ENCODE measurements at regions of chr2 and their contacts with region 1.

Region 1: GRCh38 chr2:54115284-54116137 is at the start of gene ACYP2:
- DNase-seq: peak; percentile 77 to 96 (median 91)
- ATAC-seq: peak; percentile 81
- H3K4me3 ChIP-seq: peak within 1 kb of the TSS; percentile 75 to 93
- H3K4me3 Mint-ChIP-seq: peak within 1 kb of the TSS; percentile 98
- H3K27ac ChIP-seq: peak within 1 kb of the TSS; percentile 94 to 98
- H3K27ac Mint-ChIP-seq: peak within 1 kb of the TSS; percentile 100
- H3K4me1 ChIP-seq: peaks cover 5% of the 10 kb centered on the region
- H3K4me1 Mint-ChIP-seq: peaks cover 22% of the 10 kb centered on the region
- H3K27me3 ChIP-seq: no peaks in the 10 kb centered on the region
- H3K27me3 Mint-ChIP-seq: no peaks in the 10 kb centered on the region
- CTCF ChIP-seq: no peak
- total RNA-seq, gene ACYP2: 10.2 to 10.4 TPM

Region 2: DNA sequence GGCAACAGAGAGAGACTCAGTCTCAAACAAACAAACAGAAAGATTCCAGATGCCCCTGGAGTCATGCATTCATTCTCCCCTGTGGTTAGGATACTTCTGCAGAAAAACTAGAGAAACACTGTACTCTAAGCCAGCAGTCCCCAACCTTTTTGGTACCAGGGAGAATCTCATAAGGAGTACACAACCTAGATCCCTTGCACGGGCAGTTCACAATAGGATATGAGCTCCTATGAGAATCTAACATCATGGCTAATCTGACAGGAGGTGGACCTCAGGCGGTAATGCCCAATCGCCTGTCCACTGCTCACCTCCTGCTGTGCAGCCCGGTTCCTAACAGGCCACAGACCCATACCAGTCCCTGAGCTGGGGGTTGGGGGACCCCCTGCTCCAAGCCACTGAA is 163.0 kb before region 1 on chr2:
- CTCF ChIA-PET with region 1: no interaction called
- POLR2A ChIA-PET with region 1: no interaction called
- intact Hi-C with region 1: no loop called
- DNase-seq: no peak
- ATAC-seq: no peak
- H3K4me3 ChIP-seq: no peak overlapping the region
- H3K4me3 Mint-ChIP-seq: no peak overlapping the region
- H3K27ac ChIP-seq: no peak overlapping the region
- H3K27ac Mint-ChIP-seq: no peak overlapping the region
- H3K4me1 ChIP-seq: peaks cover 11% of the 10 kb centered on the region
- H3K4me1 Mint-ChIP-seq: peaks cover 49% of the 10 kb centered on the region
- H3K27me3 ChIP-seq: no peaks in the 10 kb centered on the region
- H3K27me3 Mint-ChIP-seq: no peaks in the 10 kb centered on the region
- CTCF ChIP-seq: no peak

Region 3: GRCh38 chr2:53970724-53971602 is 144.5 kb before region 1 on chr2 and contains the start of gene PSME4:
- CTCF ChIA-PET with region 1: no interaction called
- POLR2A ChIA-PET with region 1: interaction called, 3 read pairs
- intact Hi-C with region 1: loop called (anchors 1 to 2 kb)
- DNase-seq: peak; percentile 88 to 97 (median 93)
- ATAC-seq: peak; percentile 90
- H3K4me3 ChIP-seq: peak within 1 kb of the TSS; percentile 78 to 99
- H3K4me3 Mint-ChIP-seq: peak within 1 kb of the TSS; percentile 95
- H3K27ac ChIP-seq: peak within 1 kb of the TSS; percentile 83 to 92
- H3K27ac Mint-ChIP-seq: peak within 1 kb of the TSS; percentile 98
- H3K4me1 ChIP-seq: peaks cover 25% of the 10 kb centered on the region
- H3K4me1 Mint-ChIP-seq: peaks cover 56% of the 10 kb centered on the region
- H3K27me3 ChIP-seq: no peaks in the 10 kb centered on the region
- H3K27me3 Mint-ChIP-seq: no peaks in the 10 kb centered on the region
- CTCF ChIP-seq: no peak
- total RNA-seq, gene PSME4: 98.8 to 107 TPM

Region 4: GRCh38 chr2:54097124-54097523 is 18.4 kb before region 1 on chr2:
- CTCF ChIA-PET with region 1: no interaction called
- POLR2A ChIA-PET with region 1: no interaction called
- intact Hi-C with region 1: no loop called
- DNase-seq: no peak
- ATAC-seq: no peak
- H3K4me3 ChIP-seq: no peak overlapping the region
- H3K4me3 Mint-ChIP-seq: no peak overlapping the region
- H3K27ac ChIP-seq: no peak overlapping the region
- H3K27ac Mint-ChIP-seq: no peak overlapping the region
- H3K4me1 ChIP-seq: peaks cover 9% of the 10 kb centered on the region
- H3K4me1 Mint-ChIP-seq: peaks cover 17% of the 10 kb centered on the region
- H3K27me3 ChIP-seq: no peaks in the 10 kb centered on the region
- H3K27me3 Mint-ChIP-seq: no peaks in the 10 kb centered on the region
- CTCF ChIP-seq: no peak

Region 5: DNA sequence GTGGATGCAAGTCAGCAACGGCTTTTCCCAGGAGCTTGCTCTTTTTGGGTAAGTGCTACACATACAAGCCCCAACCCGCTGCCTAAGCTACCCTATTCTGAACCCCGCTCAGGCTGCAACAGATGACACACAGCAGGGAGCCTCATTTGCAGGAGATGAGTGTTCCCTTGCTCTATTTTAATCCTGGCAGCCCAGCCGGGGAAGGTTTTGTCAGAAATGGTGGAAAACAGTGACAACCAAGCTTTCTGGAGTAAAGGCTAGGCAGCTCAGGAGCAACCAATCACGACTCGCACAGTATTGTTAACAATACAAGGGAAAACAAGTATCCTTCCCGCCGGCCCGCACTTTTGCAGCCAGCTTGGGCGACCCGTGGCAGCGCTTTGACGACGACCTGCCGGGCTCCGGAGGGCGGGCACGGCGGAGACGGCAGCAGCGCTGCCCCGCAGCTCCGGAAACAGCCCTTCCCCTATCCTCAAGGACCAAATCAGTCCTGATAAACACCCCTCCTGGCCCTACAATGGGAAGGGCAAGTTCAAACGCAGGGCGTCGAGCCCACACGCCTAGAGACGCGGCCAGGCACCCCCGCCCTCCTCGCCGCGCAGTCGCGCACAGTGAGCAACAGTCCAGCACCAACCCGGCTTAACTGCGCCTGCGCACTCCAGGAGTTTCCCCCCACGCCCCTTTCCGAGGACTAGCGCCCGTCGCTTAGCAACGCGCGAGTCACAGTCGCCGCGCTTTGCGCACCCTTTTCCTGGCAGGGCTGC is 214.8 kb after region 1 on chr2:
- CTCF ChIA-PET with region 1: no interaction called
- POLR2A ChIA-PET with region 1: interaction called, 3 read pairs
- intact Hi-C with region 1: loop called (anchors 1 to 5 kb)
- DNase-seq: peak; percentile 65 to 94 (median 85)
- ATAC-seq: peak; percentile 96
- H3K4me3 ChIP-seq: peak overlapping the region; percentile 58 to 64
- H3K4me3 Mint-ChIP-seq: peak overlapping the region; percentile 88
- H3K27ac ChIP-seq: peak overlapping the region in 1 of 2 experiments; percentile 39
- H3K27ac Mint-ChIP-seq: peak overlapping the region; percentile 52
- H3K4me1 ChIP-seq: peaks cover 11% of the 10 kb centered on the region
- H3K4me1 Mint-ChIP-seq: peaks cover 14% of the 10 kb centered on the region
- H3K27me3 ChIP-seq: no peaks in the 10 kb centered on the region
- H3K27me3 Mint-ChIP-seq: peaks cover 9% of the 10 kb centered on the region
- CTCF ChIP-seq: no peak

Region 6: DNA sequence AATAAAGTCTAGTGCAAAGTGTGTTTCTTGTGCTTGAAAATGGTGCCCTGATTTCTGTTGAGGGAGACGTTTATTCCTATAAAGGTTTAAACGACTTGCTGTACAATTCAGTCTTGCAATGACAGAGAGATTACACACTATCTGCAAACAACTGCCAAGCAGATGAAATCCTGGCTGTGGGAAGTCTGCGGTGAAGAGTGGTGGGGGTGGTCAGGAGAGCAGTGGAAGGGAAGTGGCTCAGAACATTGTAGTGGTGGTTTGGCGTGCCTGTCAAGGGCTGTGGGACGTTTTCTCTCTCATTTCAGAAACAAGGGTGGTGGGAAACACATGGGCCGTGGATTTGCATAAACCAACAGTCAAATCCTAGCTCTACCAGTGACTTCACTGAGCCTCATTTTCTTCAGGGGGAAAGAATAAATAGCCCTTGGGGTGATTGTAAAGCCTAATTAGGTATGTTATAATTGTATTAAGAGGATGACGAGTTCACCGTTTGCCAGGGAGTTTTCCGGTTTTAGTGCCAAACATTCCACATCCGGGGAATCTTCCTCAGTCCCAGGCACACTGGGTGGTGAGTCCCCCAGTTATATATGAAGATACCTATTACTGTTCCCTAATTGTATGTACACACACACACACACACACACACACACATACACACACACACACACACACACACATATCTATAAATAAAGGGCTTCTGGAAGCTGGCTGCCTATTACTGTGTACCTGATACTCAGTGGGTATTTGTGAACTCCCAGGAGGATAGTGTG is 455.6 kb after region 1 on chr2:
- CTCF ChIA-PET with region 1: no interaction called
- POLR2A ChIA-PET with region 1: no interaction called
- intact Hi-C with region 1: loop called in 1 of 2 experiments (anchors 5 kb)
- DNase-seq: peak; percentile 23 to 87 (median 69)
- ATAC-seq: peak; percentile 8
- H3K4me3 ChIP-seq: peak overlapping the region; percentile 13 to 21
- H3K4me3 Mint-ChIP-seq: peak overlapping the region; percentile 81
- H3K27ac ChIP-seq: peak overlapping the region; percentile 87 to 94
- H3K27ac Mint-ChIP-seq: peak overlapping the region; percentile 100
- H3K4me1 ChIP-seq: peaks cover 94% of the 10 kb centered on the region
- H3K4me1 Mint-ChIP-seq: peaks cover 95% of the 10 kb centered on the region
- H3K27me3 ChIP-seq: no peaks in the 10 kb centered on the region
- H3K27me3 Mint-ChIP-seq: no peaks in the 10 kb centered on the region
- CTCF ChIP-seq: no peak

Region 7: DNA sequence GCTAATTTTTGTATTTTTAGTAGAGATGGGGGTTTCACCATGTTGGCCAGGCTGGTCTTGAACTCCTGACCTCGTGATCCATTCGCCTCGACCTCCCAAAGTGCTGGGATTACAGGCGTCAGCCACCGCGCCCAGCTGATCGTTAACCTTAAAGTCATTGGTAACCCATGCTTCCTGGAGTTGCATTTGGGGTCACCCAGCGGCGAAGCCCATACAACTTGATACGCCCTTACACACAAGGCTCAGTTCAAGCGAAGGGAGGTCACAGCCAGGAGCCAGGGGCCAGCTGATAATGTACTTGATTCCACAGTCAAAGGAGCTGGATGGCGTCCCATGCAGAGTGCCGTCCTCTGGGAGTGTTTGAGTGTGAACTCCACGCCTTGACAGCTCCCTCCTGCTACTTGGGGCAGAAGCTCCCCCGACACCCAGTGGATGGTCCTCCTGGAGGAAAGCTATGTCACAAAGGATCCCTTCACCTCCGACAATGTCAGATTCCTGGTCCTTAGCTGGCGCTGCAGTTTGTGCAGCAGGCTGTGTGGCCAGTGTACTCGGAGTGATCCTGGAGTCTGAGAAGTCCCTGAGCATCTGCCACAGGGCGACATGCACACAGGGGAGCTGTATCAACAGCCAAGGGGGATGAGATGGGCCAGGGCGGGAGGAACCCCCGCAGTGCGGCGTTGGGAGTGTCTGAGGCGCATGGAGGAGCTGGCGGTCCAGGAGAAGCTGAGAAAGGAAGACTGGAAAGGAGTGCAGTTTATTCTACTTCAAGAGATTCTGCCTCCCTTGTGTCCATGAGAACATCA is 1108.6 kb after region 1 on chr2:
- CTCF ChIA-PET with region 1: no interaction called
- POLR2A ChIA-PET with region 1: no interaction called
- intact Hi-C with region 1: loop called in 1 of 2 experiments (anchors 5 kb)
- DNase-seq: peak in 3 of 9 experiments; percentile 5 to 52 (median 34)
- ATAC-seq: no peak
- H3K4me3 ChIP-seq: peak overlapping the region in 1 of 2 experiments; percentile 53
- H3K4me3 Mint-ChIP-seq: peak overlapping the region; percentile 84
- H3K27ac ChIP-seq: peak overlapping the region; percentile 68 to 72
- H3K27ac Mint-ChIP-seq: peak overlapping the region; percentile 91
- H3K4me1 ChIP-seq: peaks cover 28% of the 10 kb centered on the region
- H3K4me1 Mint-ChIP-seq: peaks cover 42% of the 10 kb centered on the region
- H3K27me3 ChIP-seq: no peaks in the 10 kb centered on the region
- H3K27me3 Mint-ChIP-seq: no peaks in the 10 kb centered on the region
- CTCF ChIP-seq: no peak

Region 8: DNA sequence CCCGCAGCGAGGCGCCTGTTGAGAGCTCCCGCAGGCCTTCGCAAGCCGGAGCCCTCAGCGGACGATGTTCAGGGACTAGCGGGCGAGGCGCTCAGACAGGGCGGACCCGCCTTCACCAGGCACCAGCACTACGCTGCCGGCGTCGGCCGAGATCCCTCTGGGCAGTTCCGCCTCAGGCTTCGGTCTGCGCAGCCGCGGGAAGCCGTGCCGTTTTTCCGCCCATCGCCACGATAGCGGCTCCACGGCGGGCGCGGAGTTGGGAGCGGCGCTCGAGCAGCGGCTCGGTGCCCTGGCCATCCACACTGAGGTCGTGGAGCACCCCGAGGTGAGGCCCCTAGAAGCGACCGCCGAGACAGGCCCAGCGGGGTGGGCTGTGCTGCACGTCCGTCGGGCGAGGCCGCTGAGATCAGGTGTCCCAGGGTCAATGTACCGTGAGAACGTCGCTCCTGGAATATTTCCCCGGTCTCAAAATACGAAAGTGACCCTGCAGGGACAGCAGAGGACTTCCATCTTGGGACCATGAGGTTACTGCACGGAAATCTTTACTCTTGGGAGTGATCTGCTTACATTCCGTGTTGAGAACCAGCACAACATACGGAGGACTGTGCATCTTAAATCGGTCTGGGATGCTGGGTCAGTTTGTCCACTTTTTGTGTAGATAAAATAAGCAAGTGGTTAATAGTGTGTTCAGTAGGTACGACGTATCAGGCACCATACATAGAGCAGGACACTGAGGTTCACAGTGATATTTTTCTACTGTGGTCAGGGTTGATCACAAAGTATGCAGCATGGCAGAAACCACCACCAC is 1166.8 kb after region 1 on chr2:
- CTCF ChIA-PET with region 1: no interaction called
- POLR2A ChIA-PET with region 1: no interaction called
- intact Hi-C with region 1: loop called in 1 of 2 experiments (anchors 5 kb)
- DNase-seq: peak; percentile 77 to 93 (median 87)
- ATAC-seq: peak; percentile 99
- H3K4me3 ChIP-seq: peak overlapping the region; percentile 62 to 70
- H3K4me3 Mint-ChIP-seq: peak overlapping the region; percentile 94
- H3K27ac ChIP-seq: peak overlapping the region; percentile 72 to 96
- H3K27ac Mint-ChIP-seq: peak overlapping the region; percentile 99
- H3K4me1 ChIP-seq: peaks cover 7% of the 10 kb centered on the region
- H3K4me1 Mint-ChIP-seq: peaks cover 31% of the 10 kb centered on the region
- H3K27me3 ChIP-seq: no peaks in the 10 kb centered on the region
- H3K27me3 Mint-ChIP-seq: no peaks in the 10 kb centered on the region
- CTCF ChIP-seq: no peak